ENCODE measurements at regions of chr20 and their contacts with region 1.

Region 1: GRCh38 chr20:41938353-41938752 is 320.2 kb upstream of the CHD6 start:
- DNase-seq: no peak
- ATAC-seq: no peak
- H3K4me3 ChIP-seq: no peak overlapping the region
- H3K27ac ChIP-seq: no peak overlapping the region
- H3K4me1 ChIP-seq: no peaks in the 10 kb centered on the region
- H3K27me3 ChIP-seq: peaks cover 0 to 6% (median 0%) of the 10 kb centered on the region in 9 donors
- CTCF ChIP-seq: no peak
- POLR2A ChIP-seq: no peak

Region 2: DNA sequence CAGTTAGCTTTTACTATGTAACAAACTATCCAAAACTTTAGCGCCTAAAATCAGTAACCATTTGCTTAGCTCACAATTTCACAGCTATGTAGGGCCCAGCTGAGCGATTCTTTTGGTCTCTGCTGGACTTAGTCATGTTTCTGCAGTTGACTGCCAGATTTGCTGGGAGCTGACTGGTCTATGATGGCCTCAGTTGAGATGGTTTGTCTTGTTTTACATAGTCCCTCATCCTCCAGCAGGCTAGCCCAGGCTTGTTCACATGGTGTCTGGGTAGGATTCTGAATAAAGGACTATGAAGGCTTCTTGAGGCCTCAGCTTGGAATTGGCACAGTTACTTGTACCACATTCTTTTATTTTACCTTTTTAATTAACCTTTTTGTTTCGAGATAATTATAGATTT is 72.4 kb before region 1 on chr20:
- intact Hi-C with region 1: no loop called
- DNase-seq: no peak
- ATAC-seq: no peak
- H3K4me3 ChIP-seq: no peak overlapping the region
- H3K27ac ChIP-seq: no peak overlapping the region
- H3K4me1 ChIP-seq: no peaks in the 10 kb centered on the region
- H3K27me3 ChIP-seq: peaks cover 0 to 4% (median 0%) of the 10 kb centered on the region in 9 donors
- CTCF ChIP-seq: no peak
- POLR2A ChIP-seq: no peak

Region 3: DNA sequence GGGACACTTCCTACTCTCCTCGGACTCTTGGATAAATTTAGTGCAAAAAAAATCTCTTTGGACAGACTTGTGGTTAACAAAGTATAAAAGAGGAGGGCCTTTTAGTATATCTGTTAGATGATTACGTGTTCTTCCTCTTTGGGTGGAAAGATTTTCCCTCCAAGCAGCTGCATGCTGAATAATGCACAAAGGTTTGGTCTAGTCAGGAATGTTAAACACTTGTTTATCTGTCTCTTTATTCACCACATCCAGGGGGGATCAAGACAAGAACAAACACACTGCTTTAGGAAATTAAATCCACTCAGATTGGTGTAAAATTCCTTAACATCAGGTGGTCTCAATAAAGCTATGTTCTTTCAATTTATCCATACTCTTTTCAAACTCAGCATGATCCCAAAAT is 59.2 kb before region 1 on chr20:
- intact Hi-C with region 1: no loop called
- DNase-seq: no peak
- ATAC-seq: no peak
- H3K4me3 ChIP-seq: no peak overlapping the region
- H3K27ac ChIP-seq: no peak overlapping the region
- H3K4me1 ChIP-seq: no peaks in the 10 kb centered on the region
- H3K27me3 ChIP-seq: peaks cover 0 to 20% (median 3%) of the 10 kb centered on the region in 9 donors
- CTCF ChIP-seq: no peak
- POLR2A ChIP-seq: no peak

Region 4: GRCh38 chr20:41951615-41952014 is 13.3 kb after region 1 on chr20:
- intact Hi-C with region 1: no loop called
- DNase-seq: no peak
- ATAC-seq: no peak
- H3K4me3 ChIP-seq: no peak overlapping the region
- H3K27ac ChIP-seq: no peak overlapping the region
- H3K4me1 ChIP-seq: no peaks in the 10 kb centered on the region
- H3K27me3 ChIP-seq: peaks cover 0 to 8% (median 0%) of the 10 kb centered on the region in 9 donors
- CTCF ChIP-seq: no peak
- POLR2A ChIP-seq: no peak

Region 5: GRCh38 chr20:42005211-42005610 is 66.9 kb after region 1 on chr20:
- intact Hi-C with region 1: loop called in 1 of 10 experiments (anchors 2 kb)
- DNase-seq: no peak
- ATAC-seq: no peak
- H3K4me3 ChIP-seq: no peak overlapping the region
- H3K27ac ChIP-seq: no peak overlapping the region
- H3K4me1 ChIP-seq: no peaks in the 10 kb centered on the region
- H3K27me3 ChIP-seq: peaks cover 0 to 9% (median 0%) of the 10 kb centered on the region in 9 donors
- CTCF ChIP-seq: no peak
- POLR2A ChIP-seq: no peak